Heart right ventricle (tissue), 16 donors: ENCODE measurements at regions of chr7 and their contacts with region 1.

Region 1: DNA sequence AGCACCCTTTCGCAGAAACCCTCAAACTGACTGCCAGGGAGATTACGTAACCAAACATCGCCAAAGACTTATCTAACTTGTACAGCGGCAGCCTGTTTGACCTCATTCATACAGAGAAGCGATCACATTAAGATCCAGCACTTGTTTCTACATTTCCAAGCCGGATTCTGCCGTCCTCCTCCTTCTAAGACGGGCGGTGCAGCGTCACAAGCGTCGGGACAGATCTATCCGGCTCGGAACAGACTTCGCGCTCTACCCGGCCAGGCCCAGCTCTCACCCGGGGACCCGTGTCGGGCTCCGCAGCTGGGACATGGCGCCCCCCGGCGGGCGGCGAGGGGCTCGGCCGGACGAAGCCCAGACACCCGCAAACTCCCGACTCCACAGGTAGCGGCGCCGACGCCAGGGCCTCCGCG is 373 bp downstream of the H2AZ2 start:
- DNase-seq: peak; percentile 87 to 90
- ATAC-seq: peak; percentile 68 to 87 (median 82)
- H3K4me3 ChIP-seq: peak overlapping the region; percentile 58 to 77 (median 66)
- H3K27ac ChIP-seq: peak overlapping the region; percentile 86 to 99 (median 96)
- H3K4me1 ChIP-seq: peaks cover 0 to 53% (median 38%) of the 10 kb centered on the region in 9 donors
- H3K27me3 ChIP-seq: no peaks in the 10 kb centered on the region
- CTCF ChIP-seq: peak; percentile 79 to 99 (median 92)

Region 2: DNA sequence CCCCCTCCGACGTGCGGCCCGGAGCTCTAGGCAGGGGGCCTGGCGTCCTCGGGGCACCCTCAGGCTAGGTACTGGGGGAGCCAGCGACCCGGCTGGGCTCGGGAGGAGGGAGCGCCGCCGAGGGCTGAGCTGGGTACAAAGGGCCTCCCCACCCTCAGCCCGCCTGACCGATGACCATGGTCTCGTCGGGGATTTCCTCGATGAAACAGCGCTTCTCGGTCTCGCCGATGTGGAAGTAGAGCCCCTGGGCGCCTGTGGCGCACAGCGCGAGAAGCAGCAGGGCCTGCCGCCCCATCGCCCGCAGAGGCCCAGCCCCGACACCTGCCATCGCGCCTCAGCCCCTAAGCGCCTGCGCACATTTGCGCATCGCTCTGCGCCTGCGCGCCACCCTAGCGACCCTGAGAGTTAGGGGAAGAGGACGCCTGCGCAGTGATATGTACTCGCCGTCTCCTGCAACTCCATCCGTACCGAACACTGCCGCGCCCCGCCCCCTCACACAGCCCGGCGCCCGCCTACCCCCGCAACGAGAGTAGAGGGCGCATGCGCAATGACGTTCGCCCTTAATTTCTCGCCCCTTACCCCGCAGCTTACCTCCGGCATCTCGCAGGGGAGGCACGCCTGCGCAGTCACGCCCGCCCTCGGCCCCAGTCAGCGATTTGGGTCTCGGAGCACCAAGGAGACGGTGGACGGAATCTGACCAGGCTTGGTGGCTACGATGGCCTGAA is 265.5 kb before region 1 on chr7 and contains the start of gene TMED4:
- intact Hi-C with region 1: loop called in 7 of 10 experiments (anchors 1 to 10 kb)
- DNase-seq: peak; percentile 99 to 100
- ATAC-seq: peak; percentile 98 to 99 (median 98)
- H3K4me3 ChIP-seq: peak within 1 kb of the TSS; percentile 72 to 99 (median 89)
- H3K27ac ChIP-seq: peak within 1 kb of the TSS; percentile 86 to 99 (median 96)
- H3K4me1 ChIP-seq: peaks cover 5 to 34% (median 24%) of the 10 kb centered on the region in 9 donors
- H3K27me3 ChIP-seq: no peaks in the 10 kb centered on the region
- CTCF ChIP-seq: no peak
- total RNA-seq, gene TMED4: 55.4 to 81.4 (median 69.4) TPM

Region 3: DNA sequence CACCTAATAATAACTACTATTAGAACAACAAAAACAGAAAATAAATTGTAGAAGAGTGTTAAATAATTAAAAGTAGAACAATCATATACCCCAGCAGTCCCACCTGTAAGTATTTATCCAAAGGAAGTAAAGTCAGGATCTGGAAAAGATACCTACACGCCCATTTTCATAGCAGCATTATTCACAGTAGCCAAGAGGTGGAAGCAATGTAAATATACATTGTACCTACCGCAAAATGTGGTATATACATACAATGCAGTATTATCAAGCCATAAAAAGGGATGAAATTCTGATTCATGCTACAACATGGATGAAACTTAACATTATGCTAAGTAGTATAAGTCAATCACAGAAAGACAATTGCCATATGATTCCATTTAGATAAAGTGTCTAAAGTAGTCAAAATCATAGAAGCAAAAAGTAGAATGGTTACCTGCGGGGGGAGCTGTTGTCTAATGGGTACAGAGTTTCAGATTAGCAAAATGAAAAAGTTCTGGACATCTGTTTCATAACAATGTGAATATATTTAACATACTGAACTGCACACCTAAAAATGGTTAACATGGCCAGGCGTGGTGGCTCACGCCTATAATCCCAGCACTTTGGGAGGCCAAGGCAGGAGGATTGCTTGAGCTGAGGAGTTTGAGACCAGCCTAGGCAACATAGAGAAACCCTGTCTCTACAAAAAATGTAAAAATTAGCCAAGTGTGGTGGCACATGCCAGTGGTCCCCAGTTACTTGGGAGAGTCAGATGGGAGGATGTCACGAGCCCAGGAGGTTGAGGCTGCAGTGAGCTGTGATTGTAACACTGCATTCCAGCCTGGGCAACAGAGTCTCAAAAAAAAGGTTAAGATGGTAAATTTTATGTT is 259.4 kb before region 1 on chr7:
- intact Hi-C with region 1: loop called in 9 of 10 experiments (anchors 1 to 10 kb)
- DNase-seq: peak in 1 of 2 donors; percentile 55
- ATAC-seq: peak; percentile 16 to 74 (median 70)
- H3K4me3 ChIP-seq: no peak overlapping the region
- H3K27ac ChIP-seq: no peak overlapping the region
- H3K4me1 ChIP-seq: peaks cover 0 to 7% (median 4%) of the 10 kb centered on the region in 9 donors
- H3K27me3 ChIP-seq: no peaks in the 10 kb centered on the region
- CTCF ChIP-seq: peak; percentile 30 to 81 (median 72)

Region 4: DNA sequence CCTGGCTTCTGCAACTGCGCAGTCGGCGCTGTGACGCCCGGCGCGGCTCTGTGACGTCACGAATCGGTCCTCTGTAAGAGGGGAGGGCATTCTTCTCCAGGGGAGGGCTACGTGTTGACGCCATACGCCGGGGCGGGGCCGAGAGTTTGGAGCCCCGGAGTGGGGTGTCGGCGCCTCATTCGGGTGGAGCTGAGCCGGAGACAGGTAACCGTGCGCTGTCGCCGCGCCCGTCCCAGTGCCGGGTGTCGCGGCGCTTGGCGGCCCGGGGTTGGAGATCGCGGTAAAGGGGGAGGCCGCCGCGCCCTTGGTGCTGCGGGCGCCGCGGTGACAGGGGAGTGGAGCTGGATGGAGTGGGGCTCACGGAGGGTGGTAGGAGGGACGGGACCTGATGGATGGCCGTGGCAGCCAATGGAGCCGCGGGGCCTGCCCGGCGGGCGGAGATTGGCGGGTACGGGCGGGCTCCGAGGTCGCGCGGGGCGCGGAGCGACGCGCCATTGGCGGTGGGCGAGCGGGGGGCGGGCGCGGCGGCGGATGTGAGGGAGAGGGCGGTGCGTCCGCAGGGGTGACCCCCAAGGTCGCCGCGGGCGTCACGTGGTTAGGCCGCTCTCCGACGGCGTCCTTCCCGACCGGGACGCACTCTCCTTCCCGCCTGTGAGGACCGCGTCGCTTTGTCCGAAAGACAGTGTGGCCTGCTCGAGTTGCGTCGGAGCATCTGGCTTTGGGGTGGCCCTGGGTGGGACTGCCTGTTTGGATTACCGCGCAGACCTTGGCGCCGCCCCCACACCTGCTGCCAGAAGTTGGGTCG is 240.9 kb before region 1 on chr7 and contains the start of gene OGDH:
- intact Hi-C with region 1: loop called in 3 of 10 experiments (anchors 1 to 5 kb)
- DNase-seq: peak; percentile 99
- ATAC-seq: peak; percentile 96 to 99 (median 98)
- H3K4me3 ChIP-seq: peak within 1 kb of the TSS; percentile 39 to 96 (median 72)
- H3K27ac ChIP-seq: peak within 1 kb of the TSS; percentile 86 to 99 (median 98)
- H3K4me1 ChIP-seq: peaks cover 2 to 35% (median 32%) of the 10 kb centered on the region in 9 donors
- H3K27me3 ChIP-seq: no peaks in the 10 kb centered on the region
- CTCF ChIP-seq: peak in 1 of 9 donors; percentile 8
- total RNA-seq, gene OGDH: 500 to 724 (median 679) TPM

Region 5: GRCh38 chr7:44748045-44748947 is 99.2 kb before region 1 on chr7 and contains the start of gene ZMIZ2:
- intact Hi-C with region 1: loop called in 3 of 10 experiments (anchors 5 kb)
- DNase-seq: peak; percentile 91 to 95
- ATAC-seq: peak; percentile 98 to 99 (median 98)
- H3K4me3 ChIP-seq: peak within 1 kb of the TSS; percentile 63 to 93 (median 90)
- H3K27ac ChIP-seq: peak within 1 kb of the TSS; percentile 91 to 99 (median 98)
- H3K4me1 ChIP-seq: peaks cover 9 to 53% (median 31%) of the 10 kb centered on the region in 9 donors
- H3K27me3 ChIP-seq: no peaks in the 10 kb centered on the region
- CTCF ChIP-seq: no peak
- total RNA-seq, gene ZMIZ2: 38.9 to 80.4 (median 47.9) TPM

Region 6: GRCh38 chr7:44797329-44798251 is 49.9 kb before region 1 on chr7:
- intact Hi-C with region 1: loop called in 7 of 10 experiments (anchors 2 to 10 kb)
- DNase-seq: peak; percentile 86 to 93
- ATAC-seq: peak; percentile 77 to 92 (median 87)
- H3K4me3 ChIP-seq: peak overlapping the region; percentile 50 to 86 (median 82)
- H3K27ac ChIP-seq: peak overlapping the region; percentile 97 to 100 (median 100)
- H3K4me1 ChIP-seq: peaks cover 0 to 38% (median 27%) of the 10 kb centered on the region in 9 donors
- H3K27me3 ChIP-seq: no peaks in the 10 kb centered on the region
- CTCF ChIP-seq: peak in 8 of 9 donors; percentile 22 to 65 (median 54)

Region 7: DNA sequence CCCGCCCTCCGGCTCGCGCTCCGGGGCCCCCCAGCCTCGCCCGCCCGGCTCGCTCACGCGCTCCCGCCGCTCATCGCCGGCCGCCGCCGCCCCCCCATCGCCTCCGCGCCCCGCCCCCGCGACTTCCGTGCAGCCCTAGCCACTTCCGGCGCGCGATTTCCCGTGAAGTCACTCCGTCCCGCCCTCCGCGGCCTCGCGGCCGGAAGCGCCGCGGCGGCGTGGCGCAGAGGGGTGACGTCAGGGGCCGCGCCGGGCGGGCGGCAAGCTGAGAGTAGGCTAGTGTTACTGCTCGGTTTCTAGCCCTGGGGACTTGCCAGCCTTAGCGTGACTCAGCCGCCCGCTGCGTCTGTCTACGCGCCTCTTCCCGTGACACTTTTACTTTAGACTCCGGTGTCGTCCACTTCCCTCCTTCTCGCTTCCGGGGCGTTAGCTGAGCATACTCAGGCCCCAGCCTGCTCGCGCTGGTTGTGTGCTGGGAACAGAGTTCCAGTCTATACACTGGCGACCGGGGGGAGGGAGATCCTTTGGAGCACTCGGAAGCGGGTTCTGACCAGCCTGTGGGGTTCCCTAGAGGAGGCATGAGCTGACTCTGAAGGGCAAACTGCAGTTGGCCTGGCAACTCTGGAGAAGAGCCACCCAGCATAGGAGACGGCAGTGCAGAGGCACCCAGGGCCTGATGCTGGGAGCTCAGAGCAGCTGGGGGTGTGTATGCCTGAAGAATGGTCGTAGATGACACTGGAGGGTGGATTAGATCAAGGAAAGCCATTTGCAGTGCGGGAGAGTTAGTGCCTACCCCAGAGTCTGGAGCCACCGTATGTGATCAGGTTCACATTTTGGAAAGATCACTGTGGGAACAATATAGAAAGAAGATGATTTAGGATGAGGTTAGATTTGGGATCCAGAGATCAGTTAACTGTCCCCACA is 38.1 kb after region 1 on chr7 and contains the start of gene PURB:
- intact Hi-C with region 1: loop called in 4 of 10 experiments (anchors 2 to 5 kb)
- DNase-seq: peak; percentile 93 to 96
- ATAC-seq: peak; percentile 97 to 99 (median 98)
- H3K4me3 ChIP-seq: peak within 1 kb of the TSS; percentile 63 to 97 (median 90)
- H3K27ac ChIP-seq: peak within 1 kb of the TSS; percentile 80 to 98 (median 97)
- H3K4me1 ChIP-seq: peaks cover 9 to 53% (median 45%) of the 10 kb centered on the region in 9 donors
- H3K27me3 ChIP-seq: no peaks in the 10 kb centered on the region
- CTCF ChIP-seq: no peak
- total RNA-seq, gene PURB: 12.7 to 18.7 (median 16.7) TPM

Region 8: DNA sequence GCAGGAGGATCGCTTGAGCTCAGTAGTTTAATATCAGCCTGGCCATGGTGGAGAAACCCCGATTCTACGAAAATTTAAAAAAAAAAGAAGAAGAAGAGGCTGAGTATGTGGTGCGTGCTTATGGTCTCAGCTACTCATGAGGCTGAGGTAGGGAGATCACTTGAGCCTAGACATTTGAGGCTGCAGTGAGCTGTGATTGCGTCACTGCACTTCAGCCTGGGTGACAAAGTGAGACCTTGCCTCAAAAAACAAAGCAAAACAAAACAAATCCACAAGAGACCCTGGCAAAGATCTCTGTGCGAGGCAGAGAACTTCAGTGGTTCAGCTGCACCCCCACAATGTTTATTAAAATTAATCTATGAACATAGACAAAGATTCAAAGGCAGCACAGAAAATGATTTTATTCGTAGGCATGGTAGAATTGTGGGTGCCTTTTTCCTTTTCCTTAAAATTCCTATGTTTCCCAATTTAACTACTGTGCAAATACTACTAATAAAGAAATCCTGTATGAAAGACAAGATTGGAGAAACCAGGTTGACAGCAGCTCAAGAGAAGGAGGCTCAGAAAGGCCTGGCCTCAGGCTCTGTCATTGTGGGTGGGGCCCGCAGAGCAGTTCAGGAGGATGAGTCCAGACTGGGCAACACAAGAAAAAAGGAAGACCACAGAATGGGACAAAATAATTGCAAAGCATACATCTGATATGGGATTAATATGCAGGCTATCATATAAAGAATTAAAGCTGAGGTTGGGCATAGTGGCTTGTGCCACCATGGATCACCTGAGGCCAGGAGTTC is 62.3 kb after region 1 on chr7:
- intact Hi-C with region 1: no loop called
- DNase-seq: no peak
- ATAC-seq: no peak
- H3K4me3 ChIP-seq: no peak overlapping the region
- H3K27ac ChIP-seq: no peak overlapping the region
- H3K4me1 ChIP-seq: no peaks in the 10 kb centered on the region
- H3K27me3 ChIP-seq: no peaks in the 10 kb centered on the region
- CTCF ChIP-seq: no peak